Activated B cell treated with CpG ODN at 0.5 μM for 24 hours (primary cell): ENCODE measurements at regions of chr3 and their contacts with region 1.

Region 1: DNA sequence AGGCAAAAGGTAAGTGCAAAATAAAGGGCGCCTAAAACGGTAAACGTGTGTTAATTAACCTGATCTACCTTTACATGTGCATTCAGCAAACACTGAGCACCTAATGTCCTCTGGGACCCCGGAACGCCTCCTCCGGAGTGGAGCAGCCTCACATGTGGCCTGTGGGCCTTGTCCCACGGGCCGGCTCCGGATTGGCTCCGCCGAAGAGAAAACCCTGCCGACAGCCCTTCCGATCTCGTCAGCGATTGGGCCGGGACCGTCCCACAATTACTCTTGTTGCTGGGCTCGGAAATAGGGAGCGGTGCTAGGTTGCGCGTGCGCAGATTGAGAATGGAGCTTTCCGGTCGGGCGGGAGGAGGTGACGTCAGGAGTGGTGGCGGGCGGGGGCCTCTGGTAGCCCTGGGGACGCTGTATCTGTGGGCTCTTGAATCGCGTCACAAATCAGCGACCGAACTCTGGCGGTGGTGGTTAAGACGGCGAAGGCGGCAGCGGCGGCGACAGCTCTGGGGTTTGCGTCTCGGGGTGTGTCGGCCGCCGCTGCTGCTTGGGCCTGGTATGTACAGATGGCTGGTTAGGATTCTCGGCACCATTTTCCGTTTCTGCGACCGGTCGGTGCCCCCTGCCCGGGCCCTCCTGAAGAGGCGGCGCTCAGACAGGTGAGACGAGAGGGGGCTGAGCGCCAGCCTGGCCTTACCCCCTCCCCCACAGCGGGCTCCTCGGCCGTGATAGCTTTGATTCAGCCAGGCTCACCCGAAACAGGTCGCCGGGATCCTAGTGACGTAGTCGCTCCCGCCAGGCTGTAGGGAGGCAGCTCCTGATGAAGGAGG is at the start of gene SENP2:
- DNase-seq: peak; percentile 98
- ATAC-seq: peak; percentile 95
- H3K4me3 Mint-ChIP-seq: peak within 1 kb of the TSS; percentile 97
- H3K27ac Mint-ChIP-seq: peak within 1 kb of the TSS; percentile 97
- H3K4me1 Mint-ChIP-seq: peaks cover 39% of the 10 kb centered on the region
- H3K27me3 Mint-ChIP-seq: no peaks in the 10 kb centered on the region
- CTCF ChIP-seq: no peak
- total RNA-seq, gene SENP2: 42.2 and 47.1 TPM in 2 replicates

Region 2: GRCh38 chr3:185268194-185268962 is 317.7 kb before region 1 on chr3:
- CTCF ChIA-PET with region 1: no interaction called
- POLR2A ChIA-PET with region 1: no interaction called
- intact Hi-C with region 1: no loop called
- DNase-seq: no peak
- ATAC-seq: no peak
- H3K4me3 Mint-ChIP-seq: no peak overlapping the region
- H3K27ac Mint-ChIP-seq: no peak overlapping the region
- H3K4me1 Mint-ChIP-seq: no peaks in the 10 kb centered on the region
- H3K27me3 Mint-ChIP-seq: peaks cover 20% of the 10 kb centered on the region
- CTCF ChIP-seq: no peak

Region 3: GRCh38 chr3:185498503-185499396 is 87.3 kb before region 1 on chr3 and contains the start of gene TMEM41A:
- CTCF ChIA-PET with region 1: no interaction called
- POLR2A ChIA-PET with region 1: interaction called, 8 read pairs
- intact Hi-C with region 1: loop called (anchors 1 kb)
- DNase-seq: peak; percentile 86
- ATAC-seq: peak; percentile 99
- H3K4me3 Mint-ChIP-seq: peak within 1 kb of the TSS; percentile 92
- H3K27ac Mint-ChIP-seq: peak within 1 kb of the TSS; percentile 73
- H3K4me1 Mint-ChIP-seq: peaks cover 19% of the 10 kb centered on the region
- H3K27me3 Mint-ChIP-seq: no peaks in the 10 kb centered on the region
- CTCF ChIP-seq: no peak
- total RNA-seq, gene TMEM41A: 20.7 and 23.3 TPM in 2 replicates